ENCODE measurements at regions of chr11 and their contacts with region 1.

Region 1: DNA sequence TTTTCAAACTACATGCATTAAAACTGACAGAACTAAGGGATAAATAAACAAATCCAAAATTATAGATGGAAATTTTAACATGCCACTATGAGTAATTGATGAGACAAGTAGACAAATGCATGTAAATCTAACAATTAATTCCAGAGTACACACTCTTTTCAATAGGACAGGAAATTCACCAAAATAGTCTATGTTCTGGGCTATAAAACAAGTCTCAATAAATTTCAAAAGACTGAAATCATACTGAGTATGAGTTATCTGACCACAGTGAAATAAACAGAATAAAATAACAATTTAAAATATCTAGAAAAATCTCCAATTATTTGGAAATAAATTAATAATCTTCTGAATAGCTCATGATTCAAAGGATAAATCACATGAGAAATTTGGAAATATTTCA is 38.5 kb upstream of the ME3 start:
- DNase-seq: no peak
- ATAC-seq: peak; percentile 66
- H3K4me3 ChIP-seq: no peak overlapping the region
- H3K27ac ChIP-seq: no peak overlapping the region
- H3K4me1 ChIP-seq: no peaks in the 10 kb centered on the region
- H3K27me3 ChIP-seq: no peaks in the 10 kb centered on the region
- CTCF ChIP-seq: no peak

Region 2: GRCh38 chr11:86692317-86692716 is 18.6 kb before region 1 on chr11:
- CTCF ChIA-PET with region 1: no interaction called
- POLR2A ChIA-PET with region 1: no interaction called
- intact Hi-C with region 1: loop called (anchors 2 kb)
- DNase-seq: peak; percentile 14
- ATAC-seq: no peak
- H3K4me3 ChIP-seq: no peak overlapping the region
- H3K27ac ChIP-seq: no peak overlapping the region
- H3K4me1 ChIP-seq: peaks cover 42% of the 10 kb centered on the region
- H3K27me3 ChIP-seq: no peaks in the 10 kb centered on the region
- CTCF ChIP-seq: no peak

Region 3: DNA sequence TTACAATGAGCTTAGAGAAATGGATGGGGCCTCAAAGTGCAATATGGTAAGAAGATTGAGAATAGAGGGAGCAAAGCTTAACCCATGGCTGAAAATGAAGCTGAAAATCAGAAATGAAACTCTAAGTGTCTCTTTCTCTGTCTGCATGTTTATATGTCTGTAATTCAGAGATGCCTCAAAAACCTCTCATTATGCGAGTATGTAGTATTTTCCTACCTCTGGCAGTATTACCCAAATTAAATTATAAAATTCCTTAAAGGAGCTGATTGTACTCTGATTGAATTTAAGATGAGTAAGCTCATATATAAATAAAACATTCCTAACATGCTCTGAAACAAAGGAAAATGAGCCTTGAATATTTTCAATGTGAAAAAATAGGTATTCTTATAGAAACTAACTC is 49.6 kb after region 1 on chr11:
- CTCF ChIA-PET with region 1: no interaction called
- POLR2A ChIA-PET with region 1: no interaction called
- intact Hi-C with region 1: no loop called
- DNase-seq: no peak
- ATAC-seq: no peak; the same call in 1 of the 2 replicates
- H3K4me3 ChIP-seq: no peak overlapping the region
- H3K27ac ChIP-seq: no peak overlapping the region
- H3K4me1 ChIP-seq: no peaks in the 10 kb centered on the region
- H3K27me3 ChIP-seq: no peaks in the 10 kb centered on the region
- CTCF ChIP-seq: no peak

Measured in PC-3 (cell line).